Activated CD8-positive, alpha-beta T cell treated with anti-CD3 and anti-CD28 coated beads for 36 hours (primary cell): ENCODE measurements at regions of chr10 and their contacts with region 1.

Region 1: GRCh38 chr10:69408318-69409175 is 8.2 kb downstream of the TACR2 start:
- DNase-seq: peak; percentile 94
- ATAC-seq: peak; percentile 89
- H3K4me3 Mint-ChIP-seq: peak overlapping the region; percentile 47
- H3K27ac Mint-ChIP-seq: peak overlapping the region; percentile 80
- H3K4me1 Mint-ChIP-seq: peaks cover 24% of the 10 kb centered on the region
- H3K27me3 Mint-ChIP-seq: no peaks in the 10 kb centered on the region
- CTCF ChIP-seq: peak; percentile 82

Region 2: DNA sequence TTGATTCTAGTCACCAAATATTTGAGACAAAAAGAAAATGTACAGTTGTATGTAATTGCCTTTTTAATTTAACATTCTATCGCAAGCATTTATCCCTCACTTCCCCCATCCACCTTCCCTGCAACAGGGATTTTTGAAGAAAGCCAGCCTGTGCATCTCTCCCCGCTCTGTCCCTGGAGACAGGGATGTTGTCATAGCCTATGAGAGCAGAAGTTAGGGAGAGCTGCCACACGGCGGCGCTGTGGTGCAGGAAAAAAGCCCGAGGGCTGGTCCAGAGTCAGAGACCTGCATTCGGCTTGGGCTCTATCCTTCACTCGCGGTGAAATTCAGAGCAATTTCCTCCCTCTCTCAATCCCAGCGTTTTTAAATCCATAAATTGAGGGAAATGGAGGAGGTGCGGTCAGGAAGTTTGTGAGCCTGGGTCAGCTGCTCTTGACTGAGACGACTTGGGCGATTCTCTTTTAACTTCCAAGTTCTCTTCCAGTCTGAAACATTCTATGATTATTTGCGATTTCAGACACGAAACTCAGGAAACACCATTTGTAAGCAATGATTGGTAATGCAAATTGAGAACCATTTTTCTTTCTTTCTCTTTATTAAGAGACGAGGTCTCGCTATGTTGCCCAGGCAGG is 170.9 kb before region 1 on chr10:
- CTCF ChIA-PET with region 1: interaction called, 37 read pairs
- POLR2A ChIA-PET with region 1: no interaction called
- intact Hi-C with region 1: no loop called
- DNase-seq: peak; percentile 93
- ATAC-seq: peak; percentile 99
- H3K4me3 Mint-ChIP-seq: no peak overlapping the region
- H3K27ac Mint-ChIP-seq: no peak overlapping the region
- H3K4me1 Mint-ChIP-seq: peaks cover 15% of the 10 kb centered on the region
- H3K27me3 Mint-ChIP-seq: no peaks in the 10 kb centered on the region
- CTCF ChIP-seq: peak; percentile 91

Region 3: DNA sequence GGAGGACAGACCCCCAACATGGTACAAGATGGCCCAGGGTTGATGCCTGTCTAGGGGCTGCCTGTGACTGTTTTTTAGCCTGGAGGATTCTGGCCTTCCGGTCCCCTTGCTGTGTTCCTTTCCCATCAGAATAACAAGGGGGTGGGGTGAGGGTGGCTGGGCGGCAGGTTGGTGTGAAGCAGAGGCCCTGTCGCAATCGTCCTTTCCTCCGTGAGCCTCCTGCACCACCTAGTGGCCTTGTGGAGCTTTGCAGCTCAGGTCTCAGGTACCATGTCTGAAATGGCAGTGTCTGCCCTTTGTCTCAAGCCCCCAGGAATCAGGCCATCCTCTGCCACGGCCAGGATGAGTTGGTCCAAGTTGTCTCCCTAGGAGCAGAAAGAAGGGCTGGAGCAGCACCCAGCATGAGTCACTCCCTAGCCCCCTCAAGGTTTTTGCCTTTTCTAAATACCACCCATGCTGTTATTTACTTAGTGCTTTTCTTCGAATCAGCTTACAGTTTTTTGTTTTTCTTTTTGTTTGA is 16.0 kb before region 1 on chr10:
- CTCF ChIA-PET with region 1: interaction called, 24 read pairs
- POLR2A ChIA-PET with region 1: interaction called, 4 read pairs
- intact Hi-C with region 1: no loop called
- DNase-seq: peak; percentile 89
- ATAC-seq: peak; percentile 98
- H3K4me3 Mint-ChIP-seq: no peak overlapping the region
- H3K27ac Mint-ChIP-seq: peak overlapping the region; percentile 74
- H3K4me1 Mint-ChIP-seq: peaks cover 18% of the 10 kb centered on the region
- H3K27me3 Mint-ChIP-seq: no peaks in the 10 kb centered on the region
- CTCF ChIP-seq: peak; percentile 86

Region 4: DNA sequence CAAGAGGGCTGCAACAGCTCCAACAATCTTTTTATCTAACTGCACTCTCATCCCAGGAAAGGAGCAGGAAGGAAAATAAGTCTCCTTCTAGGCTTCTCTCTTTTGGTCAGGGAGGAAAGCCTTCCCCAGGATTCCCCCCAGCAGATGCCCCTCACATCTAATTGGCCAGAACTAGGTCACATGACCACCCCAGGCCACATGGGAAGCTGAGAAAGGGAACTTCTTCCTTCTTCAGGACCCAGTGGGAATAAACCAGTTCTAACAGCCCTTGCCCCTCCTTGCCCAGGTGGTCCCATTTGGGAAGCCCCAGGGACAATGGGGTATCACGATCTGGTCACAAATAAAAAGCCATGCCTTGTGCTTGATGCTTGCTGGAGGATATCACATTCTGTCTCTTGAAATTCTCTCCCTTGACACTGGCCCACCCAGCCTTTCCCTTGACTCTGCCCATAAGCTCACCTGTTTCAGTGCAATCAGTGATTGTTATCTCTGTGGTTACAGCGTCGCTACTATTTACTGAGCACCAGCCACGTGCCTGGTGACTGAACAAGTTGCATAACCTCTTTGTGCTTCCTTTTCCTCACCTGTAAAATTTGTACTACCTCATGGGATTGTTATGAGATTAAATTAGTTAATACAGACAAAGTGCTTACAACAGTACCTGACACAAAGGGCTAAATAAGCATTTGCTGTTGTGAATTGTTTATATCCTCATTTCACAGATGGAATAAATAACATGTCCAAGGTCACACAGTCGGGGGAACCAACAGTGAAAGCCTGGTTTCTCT is 17.2 kb after region 1 on chr10:
- CTCF ChIA-PET with region 1: interaction called, 19 read pairs
- POLR2A ChIA-PET with region 1: interaction called, 3 read pairs
- intact Hi-C with region 1: no loop called
- DNase-seq: no peak
- ATAC-seq: peak; percentile 21
- H3K4me3 Mint-ChIP-seq: no peak overlapping the region
- H3K27ac Mint-ChIP-seq: no peak overlapping the region
- H3K4me1 Mint-ChIP-seq: peaks cover 37% of the 10 kb centered on the region
- H3K27me3 Mint-ChIP-seq: no peaks in the 10 kb centered on the region
- CTCF ChIP-seq: no peak